ENCODE measurements at regions of chr11 and their contacts with region 1.

Region 1: GRCh38 chr11:35404388-35404775 is 15.0 kb downstream of the SLC1A2 start:
- DNase-seq: peak; percentile 18
- ATAC-seq: peak; percentile 84
- H3K4me3 ChIP-seq: peak overlapping the region in 1 of 3 experiments; percentile 11; a peak in 1 of 6 replicates
- H3K27ac ChIP-seq: no peak overlapping the region
- H3K4me1 ChIP-seq: peaks cover 37% of the 10 kb centered on the region
- H3K27me3 ChIP-seq: no peaks in the 10 kb centered on the region
- CTCF ChIP-seq: peak; percentile 74
- EP300 ChIP-seq: 0 out of 4 replicates have a peak, but pooled peaks of 1 of the 2 experiments have one; percentile 19
- POLR2A ChIP-seq: no peak
- RAD21 ChIP-seq: no peak

Region 2: GRCh38 chr11:34525887-34526636 is 878.3 kb before region 1 on chr11:
- CTCF ChIA-PET with region 1: no interaction called
- POLR2A ChIA-PET with region 1: no interaction called
- in situ Hi-C with region 1: no loop called
- intact Hi-C with region 1: loop called (anchors 10 kb)
- DNase-seq: no peak
- ATAC-seq: no peak
- H3K4me3 ChIP-seq: no peak overlapping the region
- H3K27ac ChIP-seq: no peak overlapping the region
- H3K4me1 ChIP-seq: peaks cover 55% of the 10 kb centered on the region
- H3K27me3 ChIP-seq: peaks cover 4 to 28% of the 10 kb centered on the region in 2 experiments
- CTCF ChIP-seq: no peak
- EP300 ChIP-seq: no peak
- POLR2A ChIP-seq: no peak
- RAD21 ChIP-seq: no peak

Region 3: DNA sequence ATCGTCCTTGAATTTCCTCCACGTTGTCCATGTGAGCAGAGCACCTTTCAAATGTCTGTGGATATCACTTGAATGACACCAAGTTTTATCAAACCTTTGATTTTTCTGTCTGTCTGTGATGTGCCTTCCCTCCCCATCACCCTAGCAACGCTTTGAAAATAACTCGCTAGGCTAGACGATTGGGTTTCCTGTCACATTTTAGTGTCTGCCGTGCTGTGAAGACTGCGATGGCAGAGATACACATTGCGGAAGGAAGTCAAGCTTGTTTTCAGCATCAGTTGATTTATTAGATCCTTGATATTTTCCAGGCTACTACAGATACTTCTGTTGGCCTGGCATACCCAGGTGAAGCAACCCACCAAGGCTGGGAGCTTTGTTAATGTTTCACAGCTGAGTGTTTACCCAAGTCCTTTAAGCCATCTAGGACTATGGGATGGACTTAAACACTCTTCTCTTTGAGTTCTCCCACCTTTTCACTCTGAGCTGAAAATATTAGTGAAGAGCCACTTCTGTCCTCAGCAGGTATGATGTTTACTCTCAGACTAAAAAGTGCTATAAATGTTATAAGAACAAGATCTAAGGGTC is 359.1 kb before region 1 on chr11:
- CTCF ChIA-PET with region 1: no interaction called
- POLR2A ChIA-PET with region 1: no interaction called
- in situ Hi-C with region 1: no loop called
- intact Hi-C with region 1: no loop called
- DNase-seq: peak; percentile 64
- ATAC-seq: peak; percentile 100
- H3K4me3 ChIP-seq: no peak overlapping the region
- H3K27ac ChIP-seq: no peak overlapping the region
- H3K4me1 ChIP-seq: peaks cover 18% of the 10 kb centered on the region
- H3K27me3 ChIP-seq: peaks cover 0 to 3% of the 10 kb centered on the region in 2 experiments; a peak in 1 of 5 replicates
- CTCF ChIP-seq: no peak
- EP300 ChIP-seq: no peak
- POLR2A ChIP-seq: no peak
- RAD21 ChIP-seq: no peak

Measured in HepG2 (cell line).